A673 (cell line): ENCODE measurements at regions of chr1 and their contacts with region 1.

Region 1: DNA sequence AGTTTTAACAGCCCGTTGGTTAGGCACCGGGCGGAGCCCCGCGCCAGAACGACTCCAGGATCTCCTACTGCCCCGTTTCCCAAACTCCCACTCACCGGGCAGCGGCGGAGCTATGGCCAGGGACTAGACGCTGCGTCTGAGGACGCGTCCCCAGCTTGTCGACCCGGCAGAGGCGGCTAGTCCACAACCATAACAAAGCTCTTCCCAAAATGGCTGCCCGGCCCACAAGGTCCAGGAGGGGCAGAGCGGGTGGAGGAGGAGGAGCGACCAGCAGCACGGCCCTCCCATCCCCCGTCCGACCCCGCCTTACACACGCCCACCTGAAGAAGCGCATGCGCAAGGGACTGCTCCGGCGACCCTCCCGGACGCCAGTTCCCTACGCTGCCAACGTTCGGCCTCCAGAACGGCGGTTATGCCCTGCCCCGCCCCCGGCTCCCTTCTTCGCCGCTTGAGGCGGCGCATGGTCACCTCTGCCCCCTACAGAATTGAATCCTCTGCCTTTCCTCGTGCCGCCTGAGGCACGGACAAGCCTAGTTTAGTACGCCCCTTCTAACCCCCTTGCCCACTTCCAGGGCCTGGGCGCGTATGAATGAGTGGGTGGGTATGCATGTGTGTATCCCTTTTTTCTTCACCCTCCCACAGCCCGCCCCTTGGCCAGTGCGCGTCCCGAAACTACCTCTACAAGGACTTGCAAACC is at the start of gene GPBP1L1:
- DNase-seq: peak; percentile 96
- H3K4me3 ChIP-seq: peak within 1 kb of the TSS; percentile 65
- H3K27ac ChIP-seq: peak within 1 kb of the TSS; percentile 92
- H3K4me1 ChIP-seq: peaks cover 28% of the 10 kb centered on the region
- H3K27me3 ChIP-seq: no peaks in the 10 kb centered on the region
- CTCF ChIP-seq: no peak
- total RNA-seq, gene GPBP1L1: 99.0 and 99.8 TPM in 2 replicates

Region 2: DNA sequence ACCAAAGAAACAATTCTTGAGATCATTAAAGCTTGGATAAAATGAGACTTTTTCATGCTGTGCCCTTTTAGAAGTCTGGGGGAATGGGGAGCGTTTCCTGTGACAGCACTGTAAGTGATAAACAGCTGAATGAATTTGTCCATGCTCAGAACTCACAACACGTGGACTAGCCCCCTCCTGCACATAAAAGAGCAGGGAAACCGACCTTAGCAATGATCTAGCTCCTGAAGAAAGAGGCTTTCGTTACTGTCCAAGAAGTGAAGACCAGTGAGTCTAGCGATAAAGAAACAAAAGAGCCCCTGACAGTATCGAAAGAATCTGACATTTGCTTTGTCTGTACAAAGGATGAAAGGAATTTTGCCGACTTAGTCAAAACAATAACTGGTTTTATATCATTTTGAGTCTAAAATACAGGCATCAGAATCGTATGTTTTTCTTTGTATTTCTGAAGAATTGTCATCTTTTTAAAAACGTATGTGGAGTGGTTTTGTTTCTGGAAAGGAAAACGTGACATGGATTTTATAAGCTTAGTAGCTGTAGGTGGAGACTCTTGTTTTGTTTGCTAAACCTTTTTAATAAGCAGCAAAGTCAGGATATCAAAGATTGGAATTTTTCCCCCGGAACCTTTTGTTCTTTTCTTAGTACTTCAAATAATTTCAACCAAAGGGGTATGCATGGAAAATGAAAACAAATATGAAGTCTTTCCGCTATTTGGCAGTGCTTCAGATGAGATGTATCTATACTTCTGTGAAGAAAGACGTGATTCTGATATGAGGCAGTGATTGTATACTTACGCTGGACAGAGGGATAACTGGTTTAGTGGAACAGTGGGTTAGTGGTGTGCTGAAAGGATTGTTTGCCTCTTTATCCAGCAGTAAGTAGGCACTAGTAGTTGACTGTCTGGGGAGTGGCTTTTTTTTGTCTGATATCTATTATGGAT is 178.0 kb after region 1 on chr1:
- CTCF ChIA-PET with region 1: no interaction called
- POLR2A ChIA-PET with region 1: interaction called, 14 read pairs
- intact Hi-C with region 1: no loop called
- DNase-seq: peak; percentile 57
- H3K4me3 ChIP-seq: peak overlapping the region; percentile 32
- H3K27ac ChIP-seq: peak overlapping the region; percentile 61
- H3K4me1 ChIP-seq: peaks cover 28% of the 10 kb centered on the region
- H3K27me3 ChIP-seq: no peaks in the 10 kb centered on the region
- CTCF ChIP-seq: no peak